ENCODE measurements at regions of chr1 and their contacts with region 1.

Region 1: DNA sequence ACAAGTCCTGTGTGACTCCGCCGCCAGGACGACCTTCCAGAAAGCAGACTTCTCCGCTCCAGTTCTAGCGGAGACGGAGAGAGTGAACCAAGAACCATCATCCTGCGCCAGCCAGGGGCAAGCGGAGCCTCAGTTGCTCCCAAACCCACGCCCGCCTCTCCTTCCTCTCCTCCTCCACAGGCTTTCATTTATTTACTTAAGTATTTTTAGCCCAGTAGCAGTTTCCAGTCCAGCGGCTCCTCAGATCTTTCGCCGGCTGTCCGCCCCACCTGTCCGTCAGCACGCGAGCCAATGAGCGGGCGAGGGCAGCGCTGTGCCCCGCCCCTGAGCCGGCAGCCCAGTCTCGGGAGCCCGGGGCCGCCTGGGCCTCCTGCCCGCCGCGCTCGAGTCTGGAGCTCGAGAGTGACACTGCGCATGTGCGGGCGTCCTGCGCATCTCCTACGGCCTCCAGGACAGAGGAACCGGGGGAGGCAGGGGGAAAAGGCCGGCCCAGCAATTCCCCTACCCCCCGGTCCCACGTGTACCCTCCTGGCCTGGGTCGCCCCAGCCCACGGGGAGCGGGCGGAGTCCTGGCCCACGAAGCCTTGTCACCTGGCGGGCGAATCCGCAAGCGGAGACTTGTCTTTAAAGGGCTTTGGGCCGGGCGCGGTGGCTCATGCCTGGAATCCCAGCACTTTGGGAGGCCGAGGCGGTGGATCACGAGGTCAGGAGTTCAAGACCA is at the start of gene FALEC:
- DNase-seq: peak; percentile 95 to 98
- ATAC-seq: peak; percentile 92 to 95
- H3K4me3 ChIP-seq: peak within 1 kb of the TSS; percentile 56 to 79 (median 67)
- H3K27ac ChIP-seq: peak within 1 kb of the TSS; percentile 87 to 94 (median 92)
- H3K4me1 ChIP-seq: peaks cover 6 to 14% of the 10 kb centered on the region in 2 donors
- H3K27me3 ChIP-seq: no peaks in the 10 kb centered on the region
- CTCF ChIP-seq: no peak
- POLR2A ChIP-seq: peak; percentile 35 to 86
- total RNA-seq, gene FALEC: not detected

Region 2: DNA sequence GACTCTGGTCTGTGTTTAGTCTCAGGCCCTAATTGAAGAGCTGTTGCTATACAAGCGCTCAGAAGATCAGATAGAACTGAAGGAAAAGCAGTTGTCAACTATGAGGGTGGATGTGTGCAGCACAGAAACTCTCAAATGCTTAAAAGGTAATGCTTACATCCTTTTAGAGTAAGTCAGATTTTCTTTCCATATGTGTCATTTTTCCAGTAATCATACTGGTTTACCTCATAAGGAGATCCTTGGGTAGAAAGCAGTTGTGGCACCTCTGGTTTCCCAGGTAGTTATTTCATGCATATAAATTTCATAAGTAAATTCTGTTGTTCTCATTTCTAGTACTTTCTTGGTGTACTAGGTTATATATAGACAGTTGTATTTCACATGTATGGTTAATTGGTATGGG is 71.3 kb before region 1 on chr1:
- in situ Hi-C with region 1: no loop called
- intact Hi-C with region 1: no loop called
- DNase-seq: no peak
- ATAC-seq: no peak
- H3K4me3 ChIP-seq: no peak overlapping the region
- H3K27ac ChIP-seq: no peak overlapping the region
- H3K4me1 ChIP-seq: no peaks in the 10 kb centered on the region
- H3K27me3 ChIP-seq: no peaks in the 10 kb centered on the region
- CTCF ChIP-seq: no peak
- POLR2A ChIP-seq: no peak

Region 3: DNA sequence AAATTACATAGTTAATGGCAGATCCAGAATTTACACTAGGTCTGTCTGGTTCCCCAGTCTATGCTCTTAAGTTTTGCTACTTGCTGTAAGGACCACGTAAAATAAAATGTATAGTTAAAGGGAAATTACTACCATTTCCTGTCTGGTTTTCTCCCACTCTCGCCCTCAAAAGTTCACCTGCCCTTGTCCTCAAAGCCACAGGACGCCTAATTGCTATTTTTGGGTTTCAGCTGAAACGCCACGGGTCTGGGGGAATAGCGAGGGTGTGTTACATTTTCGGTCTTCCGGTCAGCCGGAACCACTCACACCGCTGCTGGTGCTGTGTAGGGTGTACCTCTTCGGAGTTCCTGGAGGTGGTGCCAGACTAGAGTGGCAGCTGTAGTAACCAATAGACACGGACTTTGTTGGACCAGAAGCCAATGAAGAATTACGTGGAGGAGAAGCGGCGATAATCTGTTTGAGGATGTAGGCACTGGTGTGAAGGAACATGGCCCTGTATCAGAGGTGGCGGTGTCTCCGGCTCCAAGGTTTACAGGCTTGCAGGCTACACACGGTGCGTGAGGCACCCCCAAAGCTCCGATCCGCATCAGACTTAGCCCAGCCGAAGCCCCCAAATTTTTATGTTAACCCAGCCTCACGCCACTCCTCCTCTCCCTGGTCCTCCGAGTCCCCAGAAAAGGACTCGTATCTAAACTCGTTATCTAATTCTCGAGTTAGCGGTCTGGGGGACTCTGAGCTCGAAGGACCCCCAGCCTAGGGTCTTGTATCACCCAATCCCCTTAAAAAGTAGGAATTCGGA is 28.3 kb before region 1 on chr1 and contains the start of gene TARS2:
- in situ Hi-C with region 1: no loop called
- intact Hi-C with region 1: loop called (anchors 2 kb)
- DNase-seq: peak; percentile 96 to 97
- ATAC-seq: peak; percentile 100
- H3K4me3 ChIP-seq: peak within 1 kb of the TSS; percentile 79 to 96 (median 88)
- H3K27ac ChIP-seq: peak within 1 kb of the TSS; percentile 86 to 94 (median 88)
- H3K4me1 ChIP-seq: peaks cover 12 to 13% of the 10 kb centered on the region in 2 donors
- H3K27me3 ChIP-seq: no peaks in the 10 kb centered on the region
- CTCF ChIP-seq: peak in 4 of 5 experiments; percentile 45 to 49 (median 48)
- POLR2A ChIP-seq: peak; percentile 35 to 43
- total RNA-seq, gene TARS2: 15.0 to 26.7 (median 18.4) TPM